OCI-LY7 (cell line): ENCODE measurements at regions of chr18 and their contacts with region 1.

Region 1: DNA sequence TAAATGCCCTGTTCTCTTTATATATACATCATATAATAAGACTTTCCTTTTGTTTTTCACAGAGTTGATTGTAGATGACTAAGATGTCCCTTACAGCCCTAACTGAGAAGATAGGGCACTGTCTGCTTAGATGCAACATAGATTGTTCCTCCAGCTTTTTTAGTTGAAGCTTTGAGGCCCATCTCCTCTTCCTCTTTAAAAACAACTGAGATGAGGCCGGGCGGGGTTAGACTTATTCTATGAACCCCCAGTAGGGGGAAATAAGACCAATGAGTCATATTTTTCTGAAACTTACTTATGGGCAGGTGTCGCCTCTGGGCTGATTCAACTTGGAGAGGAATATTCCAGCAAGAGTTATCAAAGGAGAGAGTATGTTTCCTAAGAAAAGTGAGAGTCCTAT is 84.6 kb downstream of the FBXO15 start:
- DNase-seq: peak; percentile 72
- H3K4me3 ChIP-seq: no peak overlapping the region
- H3K27ac ChIP-seq: peak overlapping the region; percentile 63
- H3K4me1 ChIP-seq: peaks cover 50% of the 10 kb centered on the region
- CTCF ChIP-seq: peak; percentile 48

Region 2: GRCh38 chr18:74081966-74082741 is 19.1 kb after region 1 on chr18:
- CTCF ChIA-PET with region 1: interaction called, 3 read pairs
- POLR2A ChIA-PET with region 1: interaction called, 18 read pairs
- intact Hi-C with region 1: loop called (anchors 1 kb)
- DNase-seq: peak; percentile 77
- H3K4me3 ChIP-seq: no peak overlapping the region
- H3K27ac ChIP-seq: no peak overlapping the region
- H3K4me1 ChIP-seq: no peaks in the 10 kb centered on the region
- CTCF ChIP-seq: peak; percentile 63

Region 3: DNA sequence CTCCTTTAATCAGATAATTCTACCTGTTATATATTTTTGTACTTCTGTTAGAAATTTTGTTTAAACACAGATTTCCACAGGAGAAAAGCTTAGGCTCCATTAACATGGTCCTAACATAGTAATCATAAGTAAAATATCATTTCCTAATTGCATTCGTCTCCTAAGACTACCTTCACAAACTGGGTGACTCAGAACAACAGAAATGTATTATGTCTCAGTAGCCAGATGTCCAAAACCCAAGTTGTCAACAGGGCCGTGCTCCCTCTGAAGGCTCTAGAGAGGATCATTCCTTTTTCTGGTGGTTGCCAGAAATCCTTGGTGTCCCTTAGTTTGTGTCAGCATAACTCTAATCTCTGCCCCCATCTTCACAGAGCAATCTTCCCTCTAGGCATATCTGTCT is 79.2 kb after region 1 on chr18:
- CTCF ChIA-PET with region 1: no interaction called
- POLR2A ChIA-PET with region 1: no interaction called
- intact Hi-C with region 1: loop called (anchors 2 kb)
- DNase-seq: no peak
- H3K4me3 ChIP-seq: no peak overlapping the region
- H3K27ac ChIP-seq: no peak overlapping the region
- H3K4me1 ChIP-seq: peaks cover 7% of the 10 kb centered on the region
- CTCF ChIP-seq: no peak

Region 4: GRCh38 chr18:74147779-74148542 is 84.9 kb after region 1 on chr18 and contains the starts of genes FBXO15 and TIMM21:
- CTCF ChIA-PET with region 1: no interaction called
- POLR2A ChIA-PET with region 1: no interaction called
- intact Hi-C with region 1: loop called (anchors 2 kb)
- DNase-seq: peak; percentile 90
- H3K4me3 ChIP-seq: peak within 1 kb of the TSS; percentile 80
- H3K27ac ChIP-seq: peak within 1 kb of the TSS; percentile 94
- H3K4me1 ChIP-seq: peaks cover 25% of the 10 kb centered on the region
- CTCF ChIP-seq: no peak
- total RNA-seq, gene FBXO15: 0.54 and 0.59 TPM in 2 replicates
- total RNA-seq, gene TIMM21: 30.8 and 42.9 TPM in 2 replicates